ENCODE measurements at regions of chr20 and their contacts with region 1.

Region 1: DNA sequence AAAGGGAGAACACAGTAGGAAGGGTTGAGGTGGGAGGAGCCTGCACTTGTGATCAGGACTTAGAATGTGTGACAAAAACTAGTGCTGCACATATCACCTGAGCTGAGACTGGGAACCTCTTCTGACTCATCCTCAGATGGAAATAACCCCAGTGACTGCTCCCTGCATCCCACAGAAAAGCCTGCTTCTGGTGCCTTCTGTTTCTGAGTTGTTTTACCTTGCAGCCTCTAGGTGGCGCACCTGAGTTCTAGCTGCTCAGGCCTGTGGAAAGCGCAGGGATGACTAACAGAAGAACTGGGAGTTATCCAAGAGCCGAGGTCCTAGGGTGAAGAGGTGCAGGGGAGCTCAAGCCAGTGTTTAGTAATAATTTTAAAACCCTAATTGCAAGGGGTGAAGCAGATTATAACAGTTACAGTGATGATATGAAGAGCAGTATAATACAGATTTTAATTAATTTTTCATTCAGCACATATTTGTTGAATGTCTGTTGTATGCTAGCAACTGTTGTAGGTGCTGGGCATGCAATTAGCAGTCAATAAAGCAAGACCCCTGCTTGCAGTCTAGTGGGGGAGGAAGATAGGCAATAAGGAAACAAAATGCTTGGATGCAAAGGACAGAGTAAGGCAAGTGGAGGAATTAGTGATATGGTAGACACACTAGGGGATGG is 302.5 kb downstream of the DHX35 start:
- DNase-seq: peak; percentile 39 to 75
- H3K4me3 ChIP-seq: no peak overlapping the region
- H3K27ac ChIP-seq: no peak overlapping the region
- H3K4me1 ChIP-seq: no peaks in the 10 kb centered on the region
- H3K27me3 ChIP-seq: no peaks in the 10 kb centered on the region
- CTCF ChIP-seq: peak; percentile 67 to 93 (median 86)
- EP300 ChIP-seq: no peak
- POLR2A ChIP-seq: no peak
- RAD21 ChIP-seq: peak; percentile 70 to 79

Region 2: GRCh38 chr20:38997622-38998021 is 267.0 kb before region 1 on chr20:
- CTCF ChIA-PET with region 1: no interaction called
- POLR2A ChIA-PET with region 1: no interaction called
- DNase-seq: no peak
- H3K4me3 ChIP-seq: no peak overlapping the region
- H3K27ac ChIP-seq: no peak overlapping the region
- H3K4me1 ChIP-seq: no peaks in the 10 kb centered on the region
- H3K27me3 ChIP-seq: no peaks in the 10 kb centered on the region
- CTCF ChIP-seq: no peak
- EP300 ChIP-seq: no peak
- POLR2A ChIP-seq: no peak
- RAD21 ChIP-seq: no peak

Region 3: GRCh38 chr20:39245685-39246311 is 18.8 kb before region 1 on chr20:
- CTCF ChIA-PET with region 1: interaction called, 25 read pairs
- POLR2A ChIA-PET with region 1: interaction called, 3 read pairs
- DNase-seq: no peak
- H3K4me3 ChIP-seq: no peak overlapping the region
- H3K27ac ChIP-seq: no peak overlapping the region
- H3K4me1 ChIP-seq: no peaks in the 10 kb centered on the region
- H3K27me3 ChIP-seq: no peaks in the 10 kb centered on the region; a peak in 1 of 7 replicates
- CTCF ChIP-seq: no peak
- EP300 ChIP-seq: no peak
- POLR2A ChIP-seq: no peak
- RAD21 ChIP-seq: no peak

Region 4: DNA sequence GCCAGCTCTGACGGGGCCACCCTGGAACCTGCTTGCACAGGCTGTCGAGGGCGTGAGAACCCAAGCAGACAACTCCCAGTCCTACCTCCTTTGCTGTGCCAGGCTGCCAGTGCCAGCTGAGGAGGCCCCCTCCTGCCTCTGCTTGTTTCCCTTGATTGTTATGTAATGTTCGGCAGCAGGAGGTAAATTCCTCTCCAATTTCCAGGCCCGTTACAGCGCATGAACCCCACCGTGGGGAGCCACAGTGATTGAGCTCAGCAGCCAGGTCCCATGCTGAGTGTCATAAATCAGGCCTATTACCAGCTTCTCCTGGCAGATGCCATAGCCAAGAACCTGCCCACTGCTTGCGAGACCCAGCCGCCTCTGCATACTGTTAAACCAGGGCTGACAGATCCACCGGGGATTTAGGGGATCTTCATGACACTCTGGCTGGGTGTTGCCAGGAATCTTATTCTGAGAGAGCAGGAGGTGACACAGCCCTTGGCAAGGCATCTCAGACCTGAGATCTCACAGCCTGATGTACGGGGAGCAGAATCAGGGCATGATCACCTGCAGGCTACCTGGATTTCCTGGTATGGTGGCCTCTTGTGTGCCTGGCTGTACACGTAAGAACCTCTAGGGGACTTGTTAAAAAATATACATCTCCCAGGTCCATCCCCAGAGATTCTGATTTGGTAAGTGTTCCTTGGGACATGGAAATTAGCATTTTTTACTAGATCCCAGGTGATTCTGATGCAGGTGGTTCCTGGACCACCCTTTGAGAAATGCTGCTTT is 18.2 kb after region 1 on chr20:
- CTCF ChIA-PET with region 1: interaction called, 44 read pairs
- POLR2A ChIA-PET with region 1: no interaction called
- DNase-seq: peak in 1 of 2 experiments; percentile 67
- H3K4me3 ChIP-seq: peak overlapping the region in 2 of 4 experiments; percentile 8 to 15; a peak in 2 of 8 replicates
- H3K27ac ChIP-seq: no peak overlapping the region
- H3K4me1 ChIP-seq: peaks cover 8 to 17% (median 11%) of the 10 kb centered on the region in 4 experiments; a peak in 6 of 7 replicates
- H3K27me3 ChIP-seq: 0 out of 7 replicates have a peak, but pooled peaks cover 0 to 4% (median under 1%) of the 10 kb centered on the region in 4 experiments
- CTCF ChIP-seq: no peak
- EP300 ChIP-seq: peak in 1 of 2 experiments; percentile 74; a peak in 1 of 3 replicates
- POLR2A ChIP-seq: no peak
- RAD21 ChIP-seq: peak in 1 of 2 experiments; percentile 19; a peak in 2 of 4 replicates

Region 5: GRCh38 chr20:39398656-39399055 is 134.0 kb after region 1 on chr20:
- CTCF ChIA-PET with region 1: interaction called, 45 read pairs
- POLR2A ChIA-PET with region 1: no interaction called
- DNase-seq: no peak
- H3K4me3 ChIP-seq: no peak overlapping the region
- H3K27ac ChIP-seq: no peak overlapping the region
- H3K4me1 ChIP-seq: no peaks in the 10 kb centered on the region
- H3K27me3 ChIP-seq: no peaks in the 10 kb centered on the region
- CTCF ChIP-seq: peak in 2 of 3 experiments; percentile 33 to 42; a peak in 2 of 4 replicates
- EP300 ChIP-seq: no peak
- POLR2A ChIP-seq: no peak
- RAD21 ChIP-seq: peak; percentile 51 to 70

Region 6: DNA sequence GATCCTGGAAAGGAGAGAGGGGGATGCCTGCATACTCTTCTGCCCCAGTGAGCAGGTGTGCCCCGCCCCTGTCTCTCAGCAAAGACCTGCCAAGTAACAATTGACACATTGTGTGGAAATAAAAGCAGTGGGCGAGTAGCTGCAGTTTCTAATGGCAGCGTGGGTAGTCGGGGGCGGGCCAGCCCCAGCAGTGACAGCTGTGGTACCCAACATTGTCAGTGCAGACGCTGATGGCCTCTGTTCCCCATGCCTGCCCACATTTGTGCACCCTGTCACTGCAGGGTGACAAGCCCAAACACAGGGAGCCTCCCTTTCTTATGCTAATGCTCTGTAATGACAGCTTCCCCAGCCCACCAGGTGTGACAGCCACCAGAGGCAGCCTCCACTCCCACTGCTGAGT is 189.3 kb after region 1 on chr20:
- CTCF ChIA-PET with region 1: interaction called, 10 read pairs
- POLR2A ChIA-PET with region 1: no interaction called
- DNase-seq: no peak
- H3K4me3 ChIP-seq: no peak overlapping the region
- H3K27ac ChIP-seq: no peak overlapping the region
- H3K4me1 ChIP-seq: peaks cover 0 to 9% (median 1%) of the 10 kb centered on the region in 4 experiments; a peak in 4 of 7 replicates
- H3K27me3 ChIP-seq: no peaks in the 10 kb centered on the region
- CTCF ChIP-seq: no peak
- EP300 ChIP-seq: no peak
- POLR2A ChIP-seq: no peak
- RAD21 ChIP-seq: no peak

Measured in H1 (cell line).